Astrocyte of the cerebellum (primary cell): ENCODE measurements at regions of chr20 and their contacts with region 1.

Region 1: DNA sequence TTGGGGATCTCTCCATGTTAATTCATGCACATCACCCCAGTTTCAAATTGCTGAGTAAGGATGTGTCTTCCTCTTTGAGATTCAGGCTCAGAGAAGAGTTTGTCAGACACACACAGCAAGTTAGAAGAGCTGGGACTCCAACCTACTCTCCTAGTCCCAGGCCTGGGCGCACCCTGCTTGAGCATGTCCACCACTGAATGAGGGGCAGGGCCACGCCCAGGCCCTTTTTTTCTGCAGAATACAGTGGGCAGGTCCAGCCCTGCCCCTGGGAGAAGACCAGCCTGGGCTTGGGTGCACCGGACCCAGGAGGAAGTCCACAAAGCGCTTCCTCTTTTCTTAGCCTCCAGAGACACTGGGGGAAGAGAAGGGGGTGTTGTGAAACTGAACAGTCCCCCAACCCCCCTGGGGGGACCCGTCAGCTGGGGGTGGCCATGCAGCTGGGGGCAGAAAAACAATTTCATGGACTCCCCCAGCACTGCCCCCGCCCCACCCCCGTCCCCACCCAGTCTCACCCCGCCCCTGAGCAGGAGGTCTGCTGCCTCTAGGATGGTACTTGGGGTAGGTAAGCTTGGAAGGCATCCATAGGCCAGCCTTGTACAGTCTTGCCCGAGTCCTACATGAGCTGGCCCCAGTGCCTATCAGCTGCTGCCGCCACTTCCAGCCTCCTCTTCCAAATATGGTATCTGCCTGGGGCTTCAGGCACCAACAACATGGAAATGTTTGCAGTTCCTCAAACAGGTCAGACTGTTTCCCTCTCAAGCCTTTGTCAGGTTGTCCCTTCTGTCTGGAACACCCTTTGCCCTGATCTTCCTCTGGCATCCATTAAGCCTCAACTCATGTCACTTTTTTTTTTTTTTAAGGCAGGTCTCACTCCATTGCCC is 11.7 kb upstream of the HCK start:
- DNase-seq: no peak
- H3K4me3 ChIP-seq: no peak overlapping the region
- CTCF ChIP-seq: no peak

Region 2: GRCh38 chr20:31972471-31973021 is 67.8 kb before region 1 on chr20:
- in situ Hi-C with region 1: loop called (anchors 5 kb)
- DNase-seq: no peak
- H3K4me3 ChIP-seq: no peak overlapping the region
- CTCF ChIP-seq: no peak

Region 3: DNA sequence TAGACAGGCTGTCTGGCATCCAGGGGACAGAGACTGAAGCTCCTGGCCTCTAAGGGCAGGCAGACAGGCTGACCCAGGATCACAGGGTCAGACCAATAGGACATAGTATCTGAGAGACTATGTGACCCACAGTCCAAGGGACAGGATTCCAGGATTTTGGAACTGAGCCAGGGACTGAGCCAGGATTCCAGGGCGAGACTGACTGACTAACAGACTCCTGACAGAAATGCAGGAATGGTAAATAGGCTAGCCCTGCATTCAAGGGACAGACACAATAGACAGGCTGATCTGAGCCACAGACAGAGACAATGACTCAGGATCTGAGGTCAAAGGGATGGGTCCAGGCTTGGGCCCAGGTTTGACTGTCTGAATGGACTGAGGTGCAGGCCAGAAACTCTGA is 52.6 kb before region 1 on chr20:
- in situ Hi-C with region 1: no loop called
- DNase-seq: no peak
- H3K4me3 ChIP-seq: no peak overlapping the region
- CTCF ChIP-seq: no peak

Region 4: DNA sequence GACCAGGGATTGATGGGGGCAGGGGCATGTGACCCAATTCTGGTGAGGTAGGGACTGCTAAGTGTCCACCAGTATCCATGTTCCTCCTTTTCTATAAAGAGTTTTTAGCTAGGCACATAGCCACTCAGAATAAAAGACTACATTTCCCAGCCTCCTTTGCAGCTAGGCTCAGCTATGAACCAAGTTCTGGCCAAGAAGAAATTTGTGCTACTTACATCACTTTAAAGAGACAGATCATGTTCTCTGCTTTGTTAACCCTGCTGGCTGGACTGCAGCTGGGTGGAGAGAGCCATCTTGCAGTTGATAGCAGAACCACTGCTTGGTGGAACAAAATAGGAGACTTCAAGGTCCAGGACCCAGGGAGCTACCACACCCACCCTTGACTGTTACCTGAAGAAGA is 35.4 kb before region 1 on chr20:
- in situ Hi-C with region 1: no loop called
- DNase-seq: no peak
- H3K4me3 ChIP-seq: no peak overlapping the region
- CTCF ChIP-seq: no peak

Region 5: GRCh38 chr20:32089637-32090362 is 49.4 kb after region 1 on chr20:
- in situ Hi-C with region 1: loop called (anchors 5 kb)
- DNase-seq: no peak
- H3K4me3 ChIP-seq: no peak overlapping the region
- CTCF ChIP-seq: no peak

Region 6: DNA sequence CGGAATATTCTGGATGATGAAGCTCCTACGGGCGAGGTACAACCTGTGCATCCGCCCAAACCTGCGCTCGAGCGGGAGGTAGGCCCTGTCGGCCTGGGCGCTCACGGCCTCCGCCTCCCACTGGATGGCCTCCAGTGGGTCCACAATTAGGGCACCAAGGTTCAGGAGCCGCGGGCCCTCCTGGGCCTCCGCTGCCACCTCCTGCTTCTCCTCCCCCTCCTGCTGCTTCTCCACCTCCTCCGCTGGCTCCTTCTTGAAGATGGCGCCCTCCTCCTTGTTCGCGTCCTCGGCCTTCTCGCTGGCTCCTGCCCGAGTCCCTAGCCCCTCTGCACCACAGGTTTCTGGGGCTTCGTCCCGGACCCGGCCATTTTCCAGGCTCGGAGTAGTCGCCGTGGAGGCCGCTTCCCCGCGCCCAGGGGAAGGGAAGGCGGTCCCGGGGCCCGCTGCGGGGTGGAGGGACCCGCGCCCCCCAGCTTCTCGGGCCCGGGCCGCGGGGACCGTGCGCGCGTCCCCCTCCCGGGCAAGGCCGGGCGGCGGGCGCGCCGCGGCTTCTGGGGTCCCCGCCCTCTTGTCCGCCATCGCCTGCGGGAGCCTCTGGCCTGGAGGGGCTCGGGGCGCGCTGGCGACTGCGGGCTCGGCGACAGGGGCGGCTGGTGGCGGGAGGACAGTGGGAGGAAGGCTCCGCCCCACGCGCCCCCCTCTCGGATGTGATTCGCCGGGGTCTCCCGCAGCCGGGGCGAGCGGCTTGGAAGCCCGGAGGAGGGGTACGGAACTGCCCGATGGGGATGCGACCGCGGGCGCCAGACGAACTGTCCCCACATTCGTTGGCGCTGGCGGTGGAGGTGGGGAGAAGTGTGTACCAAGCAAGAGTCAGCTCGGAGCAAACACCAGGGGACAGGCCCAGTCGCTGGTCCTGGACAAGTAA is 149.6 kb after region 1 on chr20:
- in situ Hi-C with region 1: loop called (anchors 10 kb)
- DNase-seq: no peak
- H3K4me3 ChIP-seq: peak overlapping the region; percentile 49
- CTCF ChIP-seq: no peak